Vagina (tissue), 2 donors: ENCODE measurements at regions of chr7 and their contacts with region 1.

Region 1: DNA sequence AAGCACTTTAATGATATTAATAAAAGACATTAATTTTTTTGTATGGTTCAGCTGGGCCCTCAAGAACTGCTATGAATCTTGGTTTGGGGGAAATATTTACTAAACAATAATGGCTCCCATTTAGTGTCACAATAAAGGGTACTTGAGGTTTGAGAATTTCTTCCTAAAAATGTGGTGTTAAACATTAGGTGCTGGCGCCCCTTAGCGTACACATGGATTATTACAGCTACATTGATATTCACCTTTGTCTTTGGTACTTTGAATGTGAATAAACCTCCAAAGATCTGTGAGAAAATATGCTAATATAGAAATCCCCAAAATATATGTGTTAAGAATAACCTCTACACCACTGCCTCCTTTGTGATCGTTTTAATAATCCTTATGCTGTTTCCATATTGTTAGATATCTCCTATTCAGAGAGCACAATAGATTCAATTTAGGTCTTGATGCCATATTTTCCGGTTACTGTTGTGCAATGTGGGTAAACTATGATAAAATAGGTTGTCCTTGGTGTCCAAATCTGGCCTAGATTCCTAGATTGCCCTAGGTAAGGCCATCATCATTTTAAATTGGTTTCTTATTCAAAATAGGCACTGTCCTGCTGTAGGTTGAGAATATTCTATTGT is 161.8 kb upstream of the CACNA2D1 start:
- DNase-seq: no peak
- H3K4me3 ChIP-seq: no peak overlapping the region
- H3K27ac ChIP-seq: no peak overlapping the region
- H3K4me1 ChIP-seq: no peaks in the 10 kb centered on the region
- H3K27me3 ChIP-seq: no peaks in the 10 kb centered on the region
- CTCF ChIP-seq: peak; percentile 4 to 34 (median 27)
- POLR2A ChIP-seq: no peak

Region 2: DNA sequence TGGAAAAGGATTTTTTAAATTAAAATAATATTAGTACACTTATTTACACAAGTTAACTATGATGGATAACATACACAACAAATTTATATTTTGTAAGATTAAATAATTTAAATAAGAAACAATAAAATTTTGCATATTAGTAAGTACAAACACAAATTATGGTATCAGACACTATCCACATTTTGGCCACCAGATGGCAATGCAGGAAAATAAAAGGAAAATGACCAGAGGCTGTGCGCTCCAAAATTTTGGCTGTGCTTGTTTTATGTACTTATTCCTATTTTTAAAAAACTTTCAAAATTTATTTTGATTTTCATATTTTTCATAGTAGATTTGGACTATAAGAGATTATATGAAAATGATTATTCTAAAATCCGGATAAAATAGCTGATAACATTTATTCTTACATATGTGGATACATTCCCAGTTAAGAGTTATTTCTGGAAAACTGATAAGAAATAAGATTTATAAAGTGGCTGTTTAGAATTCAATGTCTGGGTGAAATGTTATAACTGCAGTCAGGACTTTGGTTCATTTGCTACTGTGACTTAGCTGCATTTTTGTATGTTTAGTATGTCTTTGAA is 560.8 kb before region 1 on chr7:
- intact Hi-C with region 1: loop called (anchors 10 kb)
- DNase-seq: no peak
- H3K4me3 ChIP-seq: no peak overlapping the region
- H3K27ac ChIP-seq: no peak overlapping the region
- H3K4me1 ChIP-seq: peaks cover under 1% of the 10 kb centered on the region
- H3K27me3 ChIP-seq: no peaks in the 10 kb centered on the region
- CTCF ChIP-seq: peak; percentile 39 to 64 (median 63)
- POLR2A ChIP-seq: no peak

Region 3: DNA sequence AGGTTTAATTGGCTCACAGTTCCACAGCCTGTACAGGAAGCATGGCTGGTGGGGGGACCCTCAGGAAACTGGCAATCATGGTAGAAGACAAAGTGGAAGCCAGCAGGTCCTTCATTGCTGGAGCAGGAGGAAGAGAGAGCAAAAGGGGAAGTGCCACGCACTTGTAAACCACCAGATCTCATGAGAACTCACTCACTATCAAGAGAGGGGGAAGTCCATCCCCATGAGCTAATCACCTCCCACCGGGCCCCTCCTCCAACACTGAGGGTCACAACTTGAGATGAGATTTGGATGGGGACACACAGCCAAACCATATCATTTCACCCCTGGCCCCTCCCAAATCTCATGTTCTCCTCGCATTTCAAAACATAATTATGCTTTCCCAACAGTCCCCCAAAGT is 10.2 kb after region 1 on chr7:
- intact Hi-C with region 1: no loop called
- DNase-seq: no peak
- H3K4me3 ChIP-seq: no peak overlapping the region
- H3K27ac ChIP-seq: no peak overlapping the region
- H3K4me1 ChIP-seq: no peaks in the 10 kb centered on the region
- H3K27me3 ChIP-seq: no peaks in the 10 kb centered on the region
- CTCF ChIP-seq: no peak
- POLR2A ChIP-seq: no peak